Activated CD8-positive, alpha-beta T cell treated with anti-CD3 and anti-CD28 coated beads for 36 hours (primary cell): ENCODE measurements at regions of chr12 and their contacts with region 1.

Region 1: DNA sequence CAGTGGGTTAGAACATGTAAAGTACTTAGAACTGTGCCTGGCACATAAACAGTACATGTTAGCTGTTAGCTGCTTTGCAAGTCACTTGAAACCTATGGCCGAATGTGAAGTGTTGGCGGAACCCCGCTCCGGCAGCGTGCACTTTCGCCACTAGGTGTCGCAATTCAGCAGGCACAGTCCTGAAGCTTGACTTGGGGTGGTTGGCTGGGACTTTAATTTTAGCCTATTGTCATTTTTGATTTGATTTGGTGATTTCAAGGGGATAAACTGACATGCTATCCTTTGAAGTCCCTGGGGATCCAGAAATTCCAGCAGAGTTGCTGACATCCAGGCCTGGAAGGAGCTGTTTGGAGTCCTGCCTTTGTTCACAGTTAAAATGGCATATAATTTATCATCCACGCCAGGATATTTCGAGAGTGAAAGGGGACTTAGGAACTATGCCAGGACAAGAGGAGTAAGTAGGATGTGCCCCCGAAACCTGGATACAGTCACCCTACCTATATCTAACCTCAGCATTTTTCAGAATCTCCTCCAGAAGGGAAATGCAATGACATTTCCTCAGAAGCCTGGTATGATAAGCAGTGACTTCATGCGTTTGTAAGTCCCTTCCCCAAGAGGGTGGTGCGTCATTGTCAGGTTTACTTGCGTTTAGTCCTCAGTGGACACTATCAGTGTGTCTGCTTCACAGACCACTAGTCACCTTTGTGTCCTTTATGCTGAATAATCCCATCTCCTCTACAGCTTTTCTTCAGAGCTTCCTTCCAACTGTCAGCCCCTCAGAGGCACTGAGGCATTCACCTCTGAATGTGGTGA is 3.5 kb upstream of the TSPAN9 start:
- DNase-seq: peak; percentile 89
- ATAC-seq: peak; percentile 65
- H3K4me3 Mint-ChIP-seq: no peak overlapping the region
- H3K27ac Mint-ChIP-seq: no peak overlapping the region
- H3K4me1 Mint-ChIP-seq: peaks cover 6% of the 10 kb centered on the region
- H3K27me3 Mint-ChIP-seq: peaks cover 18% of the 10 kb centered on the region
- CTCF ChIP-seq: peak; percentile 98

Region 2: DNA sequence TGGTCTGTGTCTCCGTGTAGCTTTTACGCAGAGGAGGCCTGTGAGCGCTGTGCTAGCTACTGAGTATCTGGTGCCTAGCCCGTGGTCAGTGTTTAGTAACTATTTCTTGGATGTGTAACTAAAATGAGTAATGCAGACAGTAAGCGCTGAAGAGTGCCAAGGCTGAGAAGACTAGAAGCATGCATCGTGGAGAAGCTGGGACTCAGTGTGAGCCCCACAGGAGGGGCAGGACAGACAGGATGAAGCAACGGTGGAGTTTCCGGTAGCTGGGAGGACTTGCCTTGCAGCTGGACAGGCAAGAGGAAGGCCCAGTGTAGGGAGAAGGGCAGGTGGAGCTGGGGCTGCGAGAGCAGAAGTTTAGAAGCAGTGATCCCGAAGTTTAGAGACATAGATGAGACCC is 512.3 kb before region 1 on chr12:
- CTCF ChIA-PET with region 1: no interaction called
- POLR2A ChIA-PET with region 1: no interaction called
- intact Hi-C with region 1: no loop called
- DNase-seq: no peak
- ATAC-seq: no peak
- H3K4me3 Mint-ChIP-seq: no peak overlapping the region
- H3K27ac Mint-ChIP-seq: no peak overlapping the region
- H3K4me1 Mint-ChIP-seq: no peaks in the 10 kb centered on the region
- H3K27me3 Mint-ChIP-seq: no peaks in the 10 kb centered on the region
- CTCF ChIP-seq: no peak

Region 3: GRCh38 chr12:3060778-3061458 is 12.7 kb before region 1 on chr12:
- CTCF ChIA-PET with region 1: interaction called, 43 read pairs
- POLR2A ChIA-PET with region 1: no interaction called
- intact Hi-C with region 1: no loop called
- DNase-seq: no peak
- ATAC-seq: no peak
- H3K4me3 Mint-ChIP-seq: no peak overlapping the region
- H3K27ac Mint-ChIP-seq: no peak overlapping the region
- H3K4me1 Mint-ChIP-seq: no peaks in the 10 kb centered on the region
- H3K27me3 Mint-ChIP-seq: peaks cover 23% of the 10 kb centered on the region
- CTCF ChIP-seq: no peak